ENCODE measurements at regions of chr1 and their contacts with region 1.

Region 1: GRCh38 chr1:1687846-1688245 is 4.7 kb downstream of the SLC35E2B start:
- DNase-seq: no peak
- ATAC-seq: no peak
- H3K4me3 ChIP-seq: no peak overlapping the region
- H3K27ac ChIP-seq: peak overlapping the region; percentile 65; the same call in 1 of the 2 replicates
- H3K4me1 ChIP-seq: peaks cover 5% of the 10 kb centered on the region
- H3K27me3 ChIP-seq: no peaks in the 10 kb centered on the region
- CTCF ChIP-seq: no peak
- POLR2A ChIP-seq: no peak
- RAD21 ChIP-seq: no peak

Region 2: DNA sequence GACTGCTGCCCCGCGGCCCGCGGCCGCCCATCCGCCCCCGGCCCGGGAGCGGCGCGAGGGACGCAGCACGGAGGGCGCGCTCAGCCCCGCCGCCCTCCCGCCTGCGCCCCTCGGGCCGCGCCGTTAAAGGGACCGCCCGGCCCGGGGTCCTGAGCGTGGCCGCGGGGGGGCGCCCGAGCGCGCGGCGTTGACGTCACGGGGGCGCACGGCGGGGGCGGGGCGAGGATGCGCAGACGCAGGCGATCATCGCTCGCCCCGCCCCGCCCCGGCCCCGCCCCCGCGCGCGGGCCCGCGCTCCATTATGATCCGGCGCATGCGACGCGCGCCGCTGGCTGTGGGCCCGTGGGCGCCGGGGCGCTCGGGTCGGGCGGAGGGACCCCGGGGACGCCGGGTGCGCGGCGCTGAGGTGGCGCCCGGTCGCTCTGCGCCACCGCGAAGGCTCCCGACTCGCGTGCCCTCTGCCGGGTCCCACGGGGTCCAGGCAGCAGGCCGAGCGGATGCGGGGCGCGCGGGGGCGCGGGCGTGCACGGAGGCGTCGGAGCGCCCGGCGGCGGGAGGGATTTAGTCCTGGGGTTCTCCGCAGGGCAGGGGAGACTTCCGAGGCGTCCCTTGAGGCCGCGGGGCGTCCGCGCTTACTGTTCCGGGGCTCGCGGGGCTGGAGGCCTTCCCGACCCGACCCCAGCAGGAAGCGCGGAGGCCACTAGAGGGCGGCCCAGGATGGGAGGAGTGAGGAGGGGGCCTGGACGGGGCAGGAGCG is 338.4 kb before region 1 on chr1 and contains the start of gene DVL1:
- CTCF ChIA-PET with region 1: no interaction called
- POLR2A ChIA-PET with region 1: no interaction called
- dilution Hi-C with region 1: no loop called
- in situ Hi-C with region 1: no loop called
- intact Hi-C with region 1: no loop called
- DNase-seq: peak; percentile 58
- ATAC-seq: peak; percentile 67
- H3K4me3 ChIP-seq: peak within 1 kb of the TSS; percentile 100
- H3K27ac ChIP-seq: peak within 1 kb of the TSS; percentile 79
- H3K4me1 ChIP-seq: peaks cover 49% of the 10 kb centered on the region
- H3K27me3 ChIP-seq: no peaks in the 10 kb centered on the region
- CTCF ChIP-seq: peak; percentile 51
- POLR2A ChIP-seq: no peak
- RAD21 ChIP-seq: peak; percentile 51
- total RNA-seq, gene DVL1: 27.2 and 27.5 TPM in 2 replicates

Region 3: DNA sequence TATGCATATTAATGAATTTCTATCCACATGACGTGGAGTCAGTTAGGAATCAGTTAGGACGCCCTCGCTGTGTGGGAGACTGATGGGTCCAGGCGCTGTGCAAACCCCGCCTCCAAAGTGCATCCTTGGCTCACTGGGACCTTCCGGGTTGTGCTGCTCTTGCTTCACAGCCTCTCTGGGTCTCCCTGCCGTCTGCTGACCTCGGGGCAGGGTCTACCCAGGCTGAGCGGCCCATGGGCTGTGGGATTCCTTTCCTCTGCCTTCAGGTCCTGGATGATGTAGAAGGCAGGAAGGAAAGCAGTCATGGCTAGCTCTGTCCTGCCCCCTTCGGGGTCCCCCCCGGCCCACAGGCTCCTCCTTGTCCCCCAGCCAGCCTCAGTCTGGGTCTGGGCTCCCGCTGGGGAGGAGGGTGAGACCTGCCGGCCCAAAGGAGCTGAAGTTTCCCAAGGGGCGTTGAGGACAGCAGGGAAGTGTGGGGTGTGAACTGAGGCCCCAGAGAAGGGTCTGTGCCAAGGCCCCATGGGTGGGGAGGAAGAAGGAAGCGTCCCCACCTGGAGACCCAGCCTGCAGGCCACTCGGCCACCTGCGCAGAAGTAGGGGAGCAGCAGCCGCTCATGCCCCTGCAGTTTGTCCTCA is 61.0 kb after region 1 on chr1:
- CTCF ChIA-PET with region 1: no interaction called
- POLR2A ChIA-PET with region 1: no interaction called
- dilution Hi-C with region 1: no loop called
- in situ Hi-C with region 1: loop called (anchors 5 kb)
- intact Hi-C with region 1: no loop called
- DNase-seq: no peak
- ATAC-seq: no peak
- H3K4me3 ChIP-seq: no peak overlapping the region
- H3K27ac ChIP-seq: no peak overlapping the region
- H3K4me1 ChIP-seq: no peaks in the 10 kb centered on the region
- H3K27me3 ChIP-seq: no peaks in the 10 kb centered on the region
- CTCF ChIP-seq: no peak
- POLR2A ChIP-seq: no peak
- RAD21 ChIP-seq: no peak